B cell (primary cell): ENCODE measurements at regions of chr21 and their contacts with region 1.

Region 1: DNA sequence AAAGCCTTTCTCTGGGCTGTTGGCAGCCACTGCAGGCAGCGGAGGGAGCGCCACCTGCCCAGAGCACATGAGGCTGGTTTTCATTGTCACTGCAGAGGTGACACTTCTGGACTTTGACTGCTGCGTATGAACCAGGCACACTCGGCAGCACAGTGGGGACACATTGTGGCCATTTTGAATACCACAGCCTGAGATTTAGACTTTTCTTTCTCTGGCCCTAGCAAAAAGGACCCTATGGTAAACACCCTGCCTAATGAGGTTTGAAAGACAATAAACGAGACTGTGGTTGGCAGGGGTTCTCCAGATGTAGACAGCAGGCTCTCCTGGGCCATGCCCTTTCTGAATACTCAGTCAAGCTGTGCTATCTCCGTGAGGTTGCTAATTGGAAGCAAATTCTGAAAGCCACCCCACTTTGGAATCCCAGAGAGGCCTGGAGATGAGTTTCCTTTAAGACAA is 12.0 kb upstream of the KCNE2 start:
- DNase-seq: peak; percentile 55
- ATAC-seq: peak; percentile 78
- H3K4me3 ChIP-seq: no peak overlapping the region
- H3K4me3 Mint-ChIP-seq: no peak overlapping the region
- H3K27ac ChIP-seq: no peak overlapping the region
- H3K27ac Mint-ChIP-seq: no peak overlapping the region
- H3K4me1 ChIP-seq: no peaks in the 10 kb centered on the region
- H3K4me1 Mint-ChIP-seq: peaks cover 4% of the 10 kb centered on the region
- H3K27me3 ChIP-seq: no peaks in the 10 kb centered on the region
- H3K27me3 Mint-ChIP-seq: peaks cover 26% of the 10 kb centered on the region
- CTCF ChIP-seq: peak; percentile 58

Region 2: GRCh38 chr21:33931799-33932390 is 419.9 kb before region 1 on chr21:
- CTCF ChIA-PET with region 1: interaction called, 26 read pairs
- POLR2A ChIA-PET with region 1: no interaction called
- intact Hi-C with region 1: no loop called
- DNase-seq: peak; percentile 49
- ATAC-seq: no peak
- H3K4me3 ChIP-seq: peak overlapping the region; percentile 56 to 95 (median 68)
- H3K4me3 Mint-ChIP-seq: peak overlapping the region; percentile 93
- H3K27ac ChIP-seq: peak overlapping the region; percentile 49 to 55
- H3K27ac Mint-ChIP-seq: peak overlapping the region; percentile 88
- H3K4me1 ChIP-seq: peaks cover 6 to 13% of the 10 kb centered on the region in 2 donors
- H3K4me1 Mint-ChIP-seq: peaks cover 11% of the 10 kb centered on the region
- H3K27me3 ChIP-seq: no peaks in the 10 kb centered on the region
- H3K27me3 Mint-ChIP-seq: no peaks in the 10 kb centered on the region
- CTCF ChIP-seq: no peak

Region 3: DNA sequence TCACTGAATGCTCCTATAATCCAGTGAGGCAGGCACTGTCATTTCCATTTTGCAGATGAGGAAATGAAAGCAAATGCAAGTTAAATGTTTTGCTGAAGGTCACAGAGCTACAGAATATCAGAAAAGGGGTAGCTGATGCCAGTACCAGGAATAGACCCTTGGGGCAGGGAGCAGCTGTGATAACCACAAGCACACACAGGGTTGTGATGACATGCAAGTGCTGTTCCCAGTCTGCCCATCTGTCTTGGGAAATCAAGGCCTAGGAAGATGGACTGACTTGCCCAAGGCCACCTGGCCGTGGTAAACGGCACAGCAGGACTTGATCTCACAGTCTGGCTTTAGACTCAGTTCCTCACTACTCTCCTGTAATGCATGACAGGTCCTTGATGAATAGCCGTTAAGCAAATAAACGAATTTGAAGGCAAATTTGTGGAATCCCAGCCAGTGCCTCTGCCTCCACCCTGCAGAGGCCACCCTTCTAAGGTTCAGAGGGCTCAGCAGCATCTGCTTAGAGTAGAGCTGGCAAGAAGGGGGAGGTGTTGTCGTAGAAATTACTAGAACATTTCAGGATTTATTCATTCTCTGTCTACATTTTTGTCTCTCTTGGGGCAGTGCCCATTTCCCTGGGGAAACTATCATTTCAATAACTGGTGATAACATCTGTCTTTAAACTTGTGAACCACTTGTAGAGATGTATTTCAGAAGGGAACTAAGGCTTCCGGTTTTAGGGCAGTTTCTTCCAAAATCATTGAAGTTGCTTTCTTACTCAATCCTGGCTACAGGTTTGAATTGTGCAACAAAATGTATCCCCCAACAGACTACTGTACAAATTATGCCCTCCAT is 331.6 kb before region 1 on chr21:
- CTCF ChIA-PET with region 1: interaction called, 10 read pairs
- POLR2A ChIA-PET with region 1: no interaction called
- intact Hi-C with region 1: no loop called
- DNase-seq: peak; percentile 73
- ATAC-seq: peak; percentile 62
- H3K4me3 ChIP-seq: peak overlapping the region in 2 of 5 experiments; percentile 15 to 16
- H3K4me3 Mint-ChIP-seq: peak overlapping the region; percentile 85
- H3K27ac ChIP-seq: peak overlapping the region; percentile 70 to 83
- H3K27ac Mint-ChIP-seq: peak overlapping the region; percentile 96
- H3K4me1 ChIP-seq: peaks cover 50 to 56% of the 10 kb centered on the region in 2 donors
- H3K4me1 Mint-ChIP-seq: peaks cover 50% of the 10 kb centered on the region
- H3K27me3 ChIP-seq: no peaks in the 10 kb centered on the region
- H3K27me3 Mint-ChIP-seq: no peaks in the 10 kb centered on the region
- CTCF ChIP-seq: peak; percentile 27

Region 4: GRCh38 chr21:34362136-34362444 is 10.3 kb after region 1 on chr21:
- CTCF ChIA-PET with region 1: interaction called, 24 read pairs
- POLR2A ChIA-PET with region 1: no interaction called
- intact Hi-C with region 1: no loop called
- DNase-seq: no peak
- ATAC-seq: no peak
- H3K4me3 ChIP-seq: no peak overlapping the region
- H3K4me3 Mint-ChIP-seq: no peak overlapping the region
- H3K27ac ChIP-seq: no peak overlapping the region
- H3K27ac Mint-ChIP-seq: no peak overlapping the region
- H3K4me1 ChIP-seq: peaks cover 4% of the 10 kb centered on the region in 2 donors
- H3K4me1 Mint-ChIP-seq: peaks cover 6% of the 10 kb centered on the region
- H3K27me3 ChIP-seq: peaks cover 0 to 2% (median 0%) of the 10 kb centered on the region in 4 experiments
- H3K27me3 Mint-ChIP-seq: peaks cover 30% of the 10 kb centered on the region
- CTCF ChIP-seq: peak; percentile 43

Region 5: GRCh38 chr21:34630536-34631143 is 278.8 kb after region 1 on chr21:
- CTCF ChIA-PET with region 1: interaction called, 13 read pairs
- POLR2A ChIA-PET with region 1: no interaction called
- intact Hi-C with region 1: no loop called
- DNase-seq: peak; percentile 69
- ATAC-seq: peak; percentile 63
- H3K4me3 ChIP-seq: no peak overlapping the region
- H3K4me3 Mint-ChIP-seq: no peak overlapping the region
- H3K27ac ChIP-seq: no peak overlapping the region
- H3K27ac Mint-ChIP-seq: no peak overlapping the region
- H3K4me1 ChIP-seq: no peaks in the 10 kb centered on the region
- H3K4me1 Mint-ChIP-seq: no peaks in the 10 kb centered on the region
- H3K27me3 ChIP-seq: peaks cover 0 to 3% (median under 1%) of the 10 kb centered on the region in 4 experiments
- H3K27me3 Mint-ChIP-seq: peaks cover 16% of the 10 kb centered on the region
- CTCF ChIP-seq: peak; percentile 93

Region 6: GRCh38 chr21:34888569-34889319 is 536.9 kb after region 1 on chr21:
- CTCF ChIA-PET with region 1: no interaction called
- POLR2A ChIA-PET with region 1: no interaction called
- intact Hi-C with region 1: no loop called
- DNase-seq: peak; percentile 79
- ATAC-seq: peak; percentile 44
- H3K4me3 ChIP-seq: peak overlapping the region; percentile 32 to 80 (median 62)
- H3K4me3 Mint-ChIP-seq: peak overlapping the region; percentile 94
- H3K27ac ChIP-seq: peak overlapping the region; percentile 50 to 82
- H3K27ac Mint-ChIP-seq: peak overlapping the region; percentile 93
- H3K4me1 ChIP-seq: peaks cover 49 to 58% of the 10 kb centered on the region in 2 donors
- H3K4me1 Mint-ChIP-seq: peaks cover 49% of the 10 kb centered on the region
- H3K27me3 ChIP-seq: peaks cover 0 to 13% (median 2%) of the 10 kb centered on the region in 4 experiments
- H3K27me3 Mint-ChIP-seq: no peaks in the 10 kb centered on the region
- CTCF ChIP-seq: no peak